ENCODE measurements at regions of chr1 and their contacts with region 1.

Region 1: GRCh38 chr1:45550401-45551351 is at the start of gene AKR1A1:
- DNase-seq: peak; percentile 71 to 87
- ATAC-seq: peak; percentile 97 to 99
- H3K4me3 ChIP-seq: peak within 1 kb of the TSS; percentile 72
- H3K27ac ChIP-seq: peak within 1 kb of the TSS; percentile 91 to 98
- H3K4me1 ChIP-seq: peaks cover 22% of the 10 kb centered on the region
- CTCF ChIP-seq: no peak
- EP300 ChIP-seq: no peak
- POLR2A ChIP-seq: peak; percentile 59
- RAD21 ChIP-seq: no peak; a peak in 1 of 5 replicates
- polyA plus RNA-seq, gene AKR1A1: 110 and 139 TPM in 2 replicates

Region 2: GRCh38 chr1:45521398-45522323 is 29.0 kb before region 1 on chr1 and contains the start of gene PRDX1:
- CTCF ChIA-PET with region 1: interaction called, 7 read pairs
- POLR2A ChIA-PET with region 1: interaction called, 81 read pairs
- DNase-seq: peak; percentile 72 to 95
- ATAC-seq: peak; percentile 84 to 86
- H3K4me3 ChIP-seq: peak within 1 kb of the TSS; percentile 76
- H3K27ac ChIP-seq: peak within 1 kb of the TSS; percentile 100
- H3K4me1 ChIP-seq: peaks cover 62% of the 10 kb centered on the region
- CTCF ChIP-seq: no peak
- EP300 ChIP-seq: 0 out of 5 replicates have a peak, but pooled peaks of 1 of the 2 experiments have one; percentile 17
- POLR2A ChIP-seq: peak; percentile 99
- RAD21 ChIP-seq: no peak
- polyA plus RNA-seq, gene PRDX1: 2,329 and 2,391 TPM in 2 replicates

Region 3: GRCh38 chr1:45704637-45705036 is 154.0 kb after region 1 on chr1:
- CTCF ChIA-PET with region 1: no interaction called
- POLR2A ChIA-PET with region 1: no interaction called
- DNase-seq: no peak
- ATAC-seq: no peak
- H3K4me3 ChIP-seq: no peak overlapping the region
- H3K27ac ChIP-seq: no peak overlapping the region
- H3K4me1 ChIP-seq: no peaks in the 10 kb centered on the region
- CTCF ChIP-seq: no peak
- EP300 ChIP-seq: no peak
- POLR2A ChIP-seq: no peak
- RAD21 ChIP-seq: no peak

Region 4: GRCh38 chr1:45954401-45954847 is 403.7 kb after region 1 on chr1:
- CTCF ChIA-PET with region 1: no interaction called
- POLR2A ChIA-PET with region 1: no interaction called
- DNase-seq: peak; percentile 20 to 74
- ATAC-seq: peak; percentile 85 to 90
- H3K4me3 ChIP-seq: peak overlapping the region; percentile 25; the same call in 2 of the 3 replicates
- H3K27ac ChIP-seq: peak overlapping the region; percentile 97
- H3K4me1 ChIP-seq: peaks cover 58% of the 10 kb centered on the region
- CTCF ChIP-seq: no peak
- EP300 ChIP-seq: no peak
- POLR2A ChIP-seq: no peak
- RAD21 ChIP-seq: 0 out of 5 replicates have a peak, but pooled peaks of 1 of the 2 experiments have one; percentile 11

Measured in A549 (cell line).